ENCODE measurements at regions of chr7 and their contacts with region 1.

Region 1: DNA sequence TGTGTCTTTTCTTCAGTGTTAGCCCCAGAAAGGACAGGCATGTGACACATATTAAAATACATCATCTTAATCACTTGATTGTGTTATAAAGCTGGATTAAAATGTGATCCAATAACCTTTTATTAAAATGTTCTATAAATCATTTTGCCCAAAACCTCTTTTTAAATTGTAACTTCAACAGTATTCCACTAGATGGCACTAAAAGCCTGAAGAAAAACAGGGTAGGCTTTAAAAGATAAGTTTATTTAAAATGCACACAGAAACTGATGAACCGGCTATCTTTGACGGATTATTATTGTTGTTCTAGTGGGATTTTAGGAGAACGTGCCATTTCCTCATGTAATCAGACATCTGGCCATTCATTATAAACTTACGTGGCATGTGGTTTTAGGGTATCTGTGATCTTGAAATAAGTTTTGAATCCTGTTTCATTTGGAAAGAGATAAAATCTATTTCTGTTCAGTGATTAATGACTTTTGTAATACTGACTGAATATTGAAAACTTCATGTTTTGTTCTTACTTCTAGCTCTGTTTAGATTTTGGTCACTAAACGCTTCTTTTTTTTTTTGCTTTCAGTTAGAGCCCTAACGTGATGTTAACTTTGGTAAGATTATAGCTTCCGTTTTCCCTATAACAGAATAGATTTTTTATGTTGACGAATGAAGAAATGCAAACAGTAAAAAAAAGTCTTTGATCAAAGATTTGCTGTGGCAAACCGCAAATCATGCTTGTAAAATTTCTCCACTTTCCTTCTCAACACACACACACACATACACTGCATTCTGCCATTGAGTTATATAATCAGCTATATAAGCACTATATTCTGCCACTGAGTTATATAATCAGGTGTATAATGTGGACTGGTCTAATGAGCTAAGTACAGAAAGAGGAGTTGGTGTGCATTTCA is 13.6 kb downstream of the VPS50 start:
- DNase-seq: no peak
- CTCF ChIP-seq: peak; percentile 11

Region 2: DNA sequence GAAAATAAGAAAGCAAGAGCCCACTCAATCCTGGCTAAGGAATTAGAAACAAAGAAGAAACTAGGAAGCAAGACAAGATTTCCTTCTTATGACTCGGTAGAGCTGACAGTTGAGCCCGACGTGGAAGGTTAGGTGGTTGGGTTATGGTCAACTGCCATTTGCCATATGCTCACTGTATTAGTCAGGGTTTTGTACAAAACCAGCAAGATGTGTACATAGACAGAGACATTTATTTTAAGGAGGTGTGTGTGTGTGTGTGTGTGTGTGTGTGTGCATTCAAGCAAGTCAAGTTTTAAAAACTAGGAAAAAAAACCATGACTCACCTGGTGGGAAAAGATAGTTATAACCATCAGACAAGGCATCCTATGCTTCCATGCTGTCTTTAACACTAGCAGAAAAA is 144.9 kb after region 1 on chr7:
- in situ Hi-C with region 1: no loop called
- DNase-seq: no peak
- CTCF ChIP-seq: no peak

Region 3: GRCh38 chr7:93551063-93551904 is 305.5 kb after region 1 on chr7:
- in situ Hi-C with region 1: loop called (anchors 10 kb)
- DNase-seq: no peak
- CTCF ChIP-seq: peak; percentile 51

Measured in GM13976 (cell line).